Common myeloid progenitor, CD34-positive (primary cell): ENCODE measurements at regions of chr3 and their contacts with region 1.

Region 1: GRCh38 chr3:61371123-61371522 is 119.9 kb upstream of the FHIT start:
- DNase-seq: peak; percentile 19 to 56 (median 48)
- H3K4me3 ChIP-seq: no peak overlapping the region
- H3K27ac ChIP-seq: no peak overlapping the region
- H3K4me1 ChIP-seq: no peaks in the 10 kb centered on the region
- H3K27me3 ChIP-seq: no peaks in the 10 kb centered on the region

Region 2: GRCh38 chr3:61381745-61382392 is 10.7 kb after region 1 on chr3:
- CTCF ChIA-PET with region 1: interaction called, 22 read pairs
- POLR2A ChIA-PET with region 1: no interaction called
- DNase-seq: peak; percentile 28 to 43 (median 38)
- H3K4me3 ChIP-seq: no peak overlapping the region
- H3K27ac ChIP-seq: no peak overlapping the region
- H3K4me1 ChIP-seq: no peaks in the 10 kb centered on the region
- H3K27me3 ChIP-seq: no peaks in the 10 kb centered on the region

Region 3: GRCh38 chr3:61505197-61505596 is 134.1 kb after region 1 on chr3:
- CTCF ChIA-PET with region 1: no interaction called
- POLR2A ChIA-PET with region 1: no interaction called
- DNase-seq: no peak
- H3K4me3 ChIP-seq: no peak overlapping the region
- H3K27ac ChIP-seq: no peak overlapping the region
- H3K4me1 ChIP-seq: no peaks in the 10 kb centered on the region
- H3K27me3 ChIP-seq: no peaks in the 10 kb centered on the region